Activated T-helper 2 cell treated with anti-CD3 and anti-CD28 coated beads, Interferon-gamma antibody, Interleukin-2, Interleukin-4, amounts not matched to agents 10 μg/mL and 5 μg/mL and 100 μg/mL, durations not matched to agents 14 hours and 24 hours and 36 hours (primary cell): ENCODE measurements at regions of chr14 and their contacts with region 1.

Region 1: GRCh38 chr14:53062856-53063255 is 90.3 kb downstream of the DDHD1 start:
- DNase-seq: no peak
- H3K4me3 Mint-ChIP-seq: no peak overlapping the region
- H3K27ac Mint-ChIP-seq: no peak overlapping the region
- H3K4me1 Mint-ChIP-seq: peaks cover 9% of the 10 kb centered on the region
- H3K27me3 Mint-ChIP-seq: no peaks in the 10 kb centered on the region

Region 2: DNA sequence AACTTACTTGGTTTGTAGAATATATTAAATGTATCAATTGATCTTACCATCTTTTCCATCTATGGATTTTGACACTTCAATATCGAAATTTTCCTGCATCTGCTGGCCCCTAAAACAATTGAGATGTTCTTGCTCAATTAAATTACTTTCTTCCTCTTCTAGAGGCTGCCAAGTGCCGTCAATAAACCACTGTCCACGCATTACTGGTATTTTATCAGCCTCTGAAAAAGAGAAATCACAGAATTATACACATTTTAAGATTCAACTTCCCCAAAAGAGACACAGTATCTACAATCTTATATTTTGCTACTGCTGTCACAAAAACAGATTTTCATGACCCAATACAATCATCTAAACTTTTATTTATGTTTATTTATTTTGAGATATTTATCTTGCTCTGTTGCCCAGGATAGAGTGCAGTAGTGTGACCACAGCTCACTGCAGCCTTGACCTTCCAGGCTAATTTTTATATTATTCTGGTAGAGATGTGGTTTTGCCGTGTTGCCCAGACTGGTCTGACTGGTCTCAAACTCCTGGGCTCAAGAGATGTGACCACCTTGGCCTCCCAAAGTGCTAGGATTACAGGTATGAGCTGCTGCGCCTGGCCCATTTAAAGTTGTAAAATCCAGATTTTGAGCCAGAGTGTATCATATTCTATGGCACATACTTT is 40.9 kb after region 1 on chr14:
- intact Hi-C with region 1: loop called (anchors 5 kb)
- DNase-seq: no peak
- H3K4me3 Mint-ChIP-seq: no peak overlapping the region
- H3K27ac Mint-ChIP-seq: no peak overlapping the region
- H3K4me1 Mint-ChIP-seq: peaks cover 22% of the 10 kb centered on the region
- H3K27me3 Mint-ChIP-seq: no peaks in the 10 kb centered on the region